GM10248 (cell line): ENCODE measurements at regions of chr15 and their contacts with region 1.

Region 1: GRCh38 chr15:63600616-63601025 is 3.4 kb downstream of the FBXL22 start:
- DNase-seq: peak; percentile 91
- CTCF ChIP-seq: peak; percentile 37

Region 2: GRCh38 chr15:63473999-63474809 is 126.4 kb before region 1 on chr15:
- CTCF ChIA-PET with region 1: interaction called, 13 read pairs
- POLR2A ChIA-PET with region 1: no interaction called
- DNase-seq: peak; percentile 53
- CTCF ChIP-seq: no peak

Region 3: DNA sequence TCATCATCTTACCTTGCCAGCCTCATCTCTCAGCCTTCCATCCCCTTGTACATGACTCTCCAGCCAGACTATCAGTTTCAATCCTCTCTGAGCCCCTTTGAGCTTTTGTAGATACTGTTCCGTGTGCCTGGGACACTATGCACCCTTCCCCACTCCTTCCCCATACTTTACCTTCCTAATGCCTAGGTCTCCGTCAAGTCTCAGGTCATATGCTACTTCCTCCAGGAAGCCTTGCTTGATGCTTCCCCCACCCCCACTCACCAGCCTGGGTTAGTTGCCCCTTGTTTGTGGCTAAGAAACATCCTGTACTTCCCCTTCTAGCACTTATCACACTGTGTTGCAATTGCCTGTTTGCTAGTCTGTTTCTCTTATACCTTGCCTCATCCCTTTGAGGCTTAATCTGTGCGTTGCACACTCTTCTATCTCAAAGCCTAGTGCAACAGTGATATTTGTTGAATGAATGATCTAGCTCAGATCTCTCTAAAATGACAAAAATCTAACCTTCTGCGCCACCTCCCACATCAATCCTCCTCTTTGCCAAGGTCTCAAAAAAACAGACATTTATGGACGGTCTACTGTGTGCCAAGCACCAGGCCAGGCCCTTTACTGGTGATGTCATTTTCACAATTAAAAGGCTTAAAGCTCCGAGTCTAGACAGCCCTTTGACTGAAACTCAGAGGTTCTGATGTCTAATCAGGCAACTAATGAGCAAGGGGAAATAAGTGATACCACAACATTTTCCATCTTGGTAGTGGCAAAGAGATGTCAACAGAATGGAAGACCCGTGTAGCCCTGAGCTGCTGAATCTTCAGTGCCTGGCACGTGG is 102.8 kb before region 1 on chr15:
- CTCF ChIA-PET with region 1: interaction called, 11 read pairs
- POLR2A ChIA-PET with region 1: no interaction called
- DNase-seq: no peak
- CTCF ChIP-seq: no peak

Region 4: DNA sequence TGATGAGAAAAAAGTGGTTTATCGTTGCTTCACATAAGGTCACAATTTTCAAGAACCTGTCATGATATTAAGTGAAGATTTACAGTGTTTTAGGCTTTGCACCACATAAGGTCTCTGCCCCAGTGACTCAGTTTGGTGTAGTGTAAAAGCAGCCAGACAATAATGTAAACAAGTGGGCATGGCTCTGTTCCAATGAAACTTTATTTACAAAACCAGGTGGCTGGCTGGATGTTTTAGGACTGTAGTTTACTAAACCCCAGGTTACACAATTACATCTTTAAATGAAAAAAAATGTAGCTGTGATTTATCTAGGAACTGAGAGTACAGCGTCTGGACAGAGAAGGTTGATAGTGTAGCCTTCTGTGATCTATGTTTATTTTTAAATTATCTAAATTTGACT is 13.1 kb before region 1 on chr15:
- CTCF ChIA-PET with region 1: interaction called, 25 read pairs
- POLR2A ChIA-PET with region 1: no interaction called
- DNase-seq: no peak
- CTCF ChIP-seq: no peak